ENCODE measurements at regions of chr7 and their contacts with region 1.

Region 1: GRCh38 chr7:28096713-28097112 is 83.9 kb downstream of the JAZF1 start:
- DNase-seq: peak in 1 of 2 donors; percentile 63
- ATAC-seq: peak in 7 of 8 donors; percentile 64 to 78 (median 74)
- H3K4me3 ChIP-seq: no peak overlapping the region
- H3K27ac ChIP-seq: peak overlapping the region in 2 of 10 donors; percentile 41 to 50
- H3K4me1 ChIP-seq: peaks cover 0 to 38% (median 10%) of the 10 kb centered on the region in 9 donors
- H3K27me3 ChIP-seq: no peaks in the 10 kb centered on the region
- CTCF ChIP-seq: peak; percentile 73 to 91 (median 84)

Region 2: GRCh38 chr7:27739909-27740448 is 356.7 kb before region 1 on chr7 and contains the start of gene TAX1BP1:
- intact Hi-C with region 1: loop called in 1 of 10 experiments (anchors 10 kb)
- DNase-seq: peak; percentile 97
- ATAC-seq: peak; percentile 100
- H3K4me3 ChIP-seq: peak within 1 kb of the TSS; percentile 70 to 94 (median 89)
- H3K27ac ChIP-seq: peak within 1 kb of the TSS; percentile 89 to 99 (median 96)
- H3K4me1 ChIP-seq: peaks cover 6 to 43% (median 27%) of the 10 kb centered on the region in 9 donors
- H3K27me3 ChIP-seq: no peaks in the 10 kb centered on the region
- CTCF ChIP-seq: no peak
- total RNA-seq, gene TAX1BP1: 153 to 190 (median 169) TPM

Region 3: GRCh38 chr7:28062197-28062991 is 34.3 kb before region 1 on chr7:
- intact Hi-C with region 1: loop called in 1 of 10 experiments (anchors 5 kb)
- DNase-seq: peak; percentile 54 to 65
- ATAC-seq: peak; percentile 49 to 91 (median 84)
- H3K4me3 ChIP-seq: no peak overlapping the region
- H3K27ac ChIP-seq: no peak overlapping the region
- H3K4me1 ChIP-seq: peaks cover 0 to 36% (median 18%) of the 10 kb centered on the region in 9 donors
- H3K27me3 ChIP-seq: no peaks in the 10 kb centered on the region
- CTCF ChIP-seq: peak; percentile 31 to 75 (median 71)

Measured in heart right ventricle (tissue), 16 donors.